ENCODE measurements at regions of chr3 and their contacts with region 1.

Region 1: DNA sequence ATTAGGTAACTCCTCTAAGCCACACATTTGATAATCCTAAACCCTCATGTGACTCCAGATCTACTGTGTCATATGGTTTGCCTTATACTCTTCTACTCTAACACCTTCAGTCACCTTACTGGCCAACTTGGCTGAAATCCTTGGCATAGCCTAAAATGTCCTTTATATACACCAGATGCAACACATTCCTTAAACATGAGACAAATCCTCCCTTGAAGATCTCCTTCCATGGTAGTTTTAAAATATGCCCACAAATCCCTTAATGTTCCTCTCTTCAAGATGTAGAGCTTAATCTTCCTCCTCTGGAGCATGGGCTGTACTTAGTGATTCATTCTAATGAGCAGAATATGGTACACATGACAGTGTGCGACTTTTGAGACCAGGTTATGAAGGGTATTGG is 238.9 kb downstream of the SUCLG2 start:
- DNase-seq: no peak
- H3K4me3 ChIP-seq: no peak overlapping the region
- H3K27ac ChIP-seq: no peak overlapping the region
- H3K4me1 ChIP-seq: no peaks in the 10 kb centered on the region
- CTCF ChIP-seq: no peak

Region 2: DNA sequence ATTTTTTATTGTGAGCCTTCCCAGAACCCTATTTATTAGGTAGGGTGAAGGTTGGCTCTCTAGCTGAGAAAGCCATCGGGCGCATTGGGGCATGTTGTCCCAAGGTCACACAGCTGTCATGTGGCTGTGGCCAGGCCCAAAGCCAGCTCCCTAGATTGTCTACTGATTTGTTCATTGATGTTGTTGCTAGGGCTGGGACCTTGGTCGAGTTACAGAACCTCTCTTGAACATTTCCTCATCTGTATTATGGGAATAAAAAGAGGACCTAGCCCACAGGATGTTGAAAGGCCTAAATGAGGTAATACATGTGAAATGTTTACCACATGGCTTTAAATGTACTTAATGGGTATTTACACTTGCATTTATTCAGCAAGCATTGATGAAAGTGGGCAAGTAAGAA is 13.6 kb before region 1 on chr3:
- CTCF ChIA-PET with region 1: interaction called, 3 read pairs
- POLR2A ChIA-PET with region 1: interaction called, 10 read pairs
- intact Hi-C with region 1: no loop called
- DNase-seq: no peak
- H3K4me3 ChIP-seq: no peak overlapping the region
- H3K27ac ChIP-seq: no peak overlapping the region
- H3K4me1 ChIP-seq: no peaks in the 10 kb centered on the region
- CTCF ChIP-seq: no peak

Measured in OCI-LY7 (cell line).